Natural killer cell (primary cell): ENCODE measurements at regions of chr10 and their contacts with region 1.

Region 1: GRCh38 chr10:102461187-102462054 is 10.1 kb upstream of the C10orf95 start:
- DNase-seq: peak; percentile 89 to 97
- ATAC-seq: peak; percentile 99 to 100 (median 100)
- H3K4me3 ChIP-seq: peak overlapping the region; percentile 77
- H3K4me3 Mint-ChIP-seq: peak overlapping the region; percentile 98
- H3K27ac ChIP-seq: peak overlapping the region; percentile 53
- H3K27ac Mint-ChIP-seq: peak overlapping the region; percentile 80 to 96
- H3K4me1 ChIP-seq: peaks cover 15% of the 10 kb centered on the region
- H3K4me1 Mint-ChIP-seq: peaks cover 22 to 26% of the 10 kb centered on the region in 2 donors
- H3K27me3 ChIP-seq: no peaks in the 10 kb centered on the region
- H3K27me3 Mint-ChIP-seq: peaks cover 0 to 2% of the 10 kb centered on the region in 2 donors
- CTCF ChIP-seq: no peak

Region 2: DNA sequence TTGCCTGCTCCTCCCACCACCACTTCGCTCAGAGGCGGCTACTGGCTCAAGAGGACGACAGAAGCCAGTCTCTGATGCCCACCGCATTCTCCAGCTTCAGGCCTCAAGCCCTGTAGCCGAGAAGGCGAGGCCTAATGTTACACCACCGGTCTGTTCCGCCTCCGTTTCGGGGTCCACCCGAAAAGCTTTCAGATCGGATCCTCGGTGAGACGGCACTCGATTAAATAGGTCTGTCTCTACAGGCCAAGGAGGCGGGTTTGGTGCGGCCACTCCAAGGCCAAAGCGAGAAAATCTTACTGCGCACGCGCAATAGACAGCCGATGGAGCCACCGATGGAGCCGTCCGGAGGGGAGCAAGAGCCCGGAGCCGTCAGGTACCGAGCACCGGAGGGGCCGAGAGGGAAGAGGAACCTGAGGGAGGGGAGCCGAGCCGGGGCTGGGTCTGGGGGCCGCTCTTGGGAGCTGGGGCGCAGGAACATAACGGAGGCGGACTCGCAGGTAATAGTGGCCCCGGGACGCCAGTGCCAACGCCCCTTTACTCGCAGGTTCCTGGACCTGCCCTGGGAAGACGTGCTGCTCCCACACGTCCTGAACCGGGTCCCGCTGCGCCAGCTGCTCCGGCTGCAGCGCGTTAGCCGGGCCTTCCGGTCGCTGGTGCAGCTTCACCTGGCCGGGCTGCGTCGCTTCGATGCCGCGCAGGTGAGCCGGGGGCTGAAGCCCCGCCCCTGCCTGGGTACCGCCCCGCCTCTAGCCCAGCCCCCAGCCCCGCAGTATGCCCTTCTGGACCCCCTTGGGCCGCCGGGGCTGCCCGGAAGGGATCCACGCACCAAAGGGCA is 40.4 kb before region 1 on chr10 and contains the start of gene FBXL15:
- intact Hi-C with region 1: loop called (anchors 5 kb)
- DNase-seq: peak; percentile 93 to 96
- ATAC-seq: peak; percentile 77 to 91 (median 81)
- H3K4me3 ChIP-seq: peak within 1 kb of the TSS; percentile 83
- H3K4me3 Mint-ChIP-seq: peak within 1 kb of the TSS; percentile 98
- H3K27ac ChIP-seq: peak within 1 kb of the TSS; percentile 81
- H3K27ac Mint-ChIP-seq: peak within 1 kb of the TSS; percentile 91 to 97
- H3K4me1 ChIP-seq: peaks cover 39% of the 10 kb centered on the region
- H3K4me1 Mint-ChIP-seq: peaks cover 12 to 41% of the 10 kb centered on the region in 2 donors
- H3K27me3 ChIP-seq: peaks cover 21% of the 10 kb centered on the region
- H3K27me3 Mint-ChIP-seq: peaks cover 5 to 18% of the 10 kb centered on the region in 2 donors
- CTCF ChIP-seq: no peak
- total RNA-seq, gene FBXL15: 15.2 to 17.4 (median 15.5) TPM

Region 3: DNA sequence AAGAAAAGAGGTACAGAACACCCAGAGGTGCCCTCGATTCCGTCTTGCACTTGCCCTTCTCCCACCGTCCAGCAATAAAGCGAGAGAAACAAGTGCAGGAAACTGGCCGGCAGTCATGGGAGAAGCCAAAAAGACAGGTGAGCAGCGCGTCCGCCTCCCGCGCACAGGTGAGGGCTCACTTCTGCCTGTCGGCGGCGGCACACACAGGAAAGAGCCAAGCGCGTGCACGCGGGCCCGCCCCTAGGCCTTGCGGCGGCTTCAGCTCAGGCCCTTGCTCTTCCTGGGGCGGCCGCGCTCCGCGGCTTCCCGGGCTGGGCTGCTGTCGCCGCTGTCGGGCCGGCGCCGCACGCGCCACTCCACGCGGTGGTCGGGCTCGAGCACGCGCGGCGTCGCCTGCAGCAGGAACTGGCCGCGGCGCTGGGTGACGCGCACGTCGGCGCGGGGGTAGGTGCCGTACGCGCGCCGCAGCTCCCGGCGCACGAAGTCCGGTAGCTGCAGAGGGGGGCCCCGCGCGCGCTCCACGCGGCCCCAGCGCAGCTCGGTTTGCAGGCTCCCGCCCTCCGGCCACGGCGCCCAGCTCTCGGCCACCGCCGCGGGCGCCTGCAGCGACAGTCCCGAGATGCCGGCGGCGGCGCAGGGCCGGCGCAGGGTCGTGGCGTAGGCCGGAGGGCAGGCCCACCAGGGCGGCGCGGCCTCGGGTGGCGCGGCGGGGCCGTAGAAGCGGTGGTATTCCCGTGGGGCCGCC is 11.1 kb before region 1 on chr10:
- intact Hi-C with region 1: loop called (anchors 1 kb)
- DNase-seq: peak; percentile 86 to 97
- ATAC-seq: peak; percentile 81 to 95 (median 85)
- H3K4me3 ChIP-seq: peak overlapping the region; percentile 95
- H3K4me3 Mint-ChIP-seq: peak overlapping the region; percentile 95
- H3K27ac ChIP-seq: peak overlapping the region; percentile 90
- H3K27ac Mint-ChIP-seq: peak overlapping the region; percentile 88 to 90
- H3K4me1 ChIP-seq: peaks cover 29% of the 10 kb centered on the region
- H3K4me1 Mint-ChIP-seq: peaks cover 20 to 23% of the 10 kb centered on the region in 2 donors
- H3K27me3 ChIP-seq: no peaks in the 10 kb centered on the region
- H3K27me3 Mint-ChIP-seq: no peaks in the 10 kb centered on the region
- CTCF ChIP-seq: no peak